ENCODE measurements at regions of chr9 and their contacts with region 1.

Region 1: DNA sequence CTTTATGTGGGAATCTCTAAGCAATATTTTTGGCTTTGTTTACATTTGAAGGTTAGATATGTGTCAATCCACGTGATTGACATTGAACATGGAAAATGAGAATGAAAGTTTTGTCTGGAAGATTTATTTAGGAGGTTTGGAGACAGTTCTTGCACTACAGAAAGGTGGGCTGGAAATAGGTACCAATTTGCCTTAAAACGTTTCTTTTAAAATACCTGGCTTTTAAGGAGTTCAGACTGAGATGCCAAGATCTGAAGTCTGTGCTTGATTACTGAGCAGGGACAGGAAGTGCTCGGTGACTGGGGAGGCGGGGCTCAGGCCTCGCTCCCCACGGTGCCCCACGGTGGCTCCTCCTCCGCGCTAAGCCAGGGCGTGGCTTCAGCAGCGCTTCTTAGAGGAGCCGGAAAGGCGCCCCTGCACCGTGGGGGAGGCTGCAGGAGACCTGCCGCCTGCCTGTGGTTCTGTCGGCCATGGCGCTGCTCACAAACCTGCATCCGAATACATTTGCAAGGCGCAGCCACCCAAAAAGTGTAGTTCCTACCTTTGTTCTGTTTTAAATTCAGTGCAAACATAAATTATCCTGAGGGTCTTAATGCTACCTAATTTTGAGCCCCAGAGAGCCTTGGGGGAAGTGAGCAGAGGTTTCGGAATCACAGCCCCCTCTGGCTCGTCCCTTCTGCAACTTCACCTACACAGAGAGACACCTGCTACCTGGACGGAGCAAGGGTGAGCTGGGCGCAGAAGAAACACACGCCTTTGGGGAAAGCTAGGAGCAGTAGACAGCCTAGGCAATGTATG is 49.2 kb downstream of the USP20 start:
- DNase-seq: peak; percentile 98
- H3K4me3 Mint-ChIP-seq: peak overlapping the region; percentile 80
- H3K27ac Mint-ChIP-seq: peak overlapping the region; percentile 100
- H3K4me1 Mint-ChIP-seq: peaks cover 51% of the 10 kb centered on the region
- H3K27me3 Mint-ChIP-seq: no peaks in the 10 kb centered on the region

Region 2: DNA sequence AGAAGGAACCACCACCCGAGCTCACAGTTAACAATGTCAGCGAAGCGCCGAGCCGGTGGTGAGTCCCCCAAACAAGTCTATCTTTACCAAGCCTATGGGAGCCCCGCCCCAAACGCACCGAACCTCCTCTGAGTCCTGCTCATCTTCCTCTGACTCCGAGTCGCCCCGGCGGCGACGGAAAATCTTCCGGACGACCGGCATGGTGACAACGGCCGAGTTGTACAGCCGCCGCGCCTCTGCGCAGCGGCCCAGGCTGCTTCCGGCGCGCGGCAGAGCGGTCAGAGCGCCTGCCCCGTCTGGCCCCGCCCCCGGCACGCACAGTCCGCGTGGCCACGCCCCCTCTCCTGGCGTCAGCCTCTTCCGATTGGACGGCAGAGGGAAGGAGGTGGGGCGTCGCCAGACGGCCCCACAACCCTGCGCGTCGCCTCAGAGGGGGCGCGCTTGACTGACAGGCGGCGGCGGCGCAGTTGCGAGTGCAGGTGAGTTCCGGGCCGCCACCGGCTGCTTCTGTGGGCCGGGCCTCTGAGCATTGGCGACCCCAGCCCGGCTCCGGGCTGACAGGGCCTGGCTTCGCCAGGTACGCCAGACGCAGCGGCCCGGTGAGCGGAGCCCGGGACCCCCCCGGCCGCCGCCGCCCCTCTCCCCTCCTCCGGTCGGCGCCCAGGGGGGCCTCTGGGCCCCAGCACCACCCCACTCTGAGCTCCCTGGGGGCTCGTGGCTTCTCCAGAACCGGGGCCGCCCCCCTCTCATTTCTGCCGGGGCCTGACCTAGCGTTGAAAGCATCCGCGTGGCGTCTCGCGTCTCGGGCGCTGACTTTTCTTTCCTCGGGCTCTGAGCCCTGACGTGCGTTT is 49.2 kb before region 1 on chr9 and contains the starts of genes C9orf78 and USP20:
- CTCF ChIA-PET with region 1: interaction called, 10 read pairs
- POLR2A ChIA-PET with region 1: interaction called, 98 read pairs
- DNase-seq: peak; percentile 97
- H3K4me3 Mint-ChIP-seq: peak within 1 kb of the TSS; percentile 99
- H3K27ac Mint-ChIP-seq: peak within 1 kb of the TSS; percentile 96
- H3K4me1 Mint-ChIP-seq: peaks cover 59% of the 10 kb centered on the region
- H3K27me3 Mint-ChIP-seq: no peaks in the 10 kb centered on the region
- total RNA-seq, gene C9orf78: 61.6 to 66.2 TPM
- total RNA-seq, gene USP20: 86.4 to 87.6 TPM

Region 3: DNA sequence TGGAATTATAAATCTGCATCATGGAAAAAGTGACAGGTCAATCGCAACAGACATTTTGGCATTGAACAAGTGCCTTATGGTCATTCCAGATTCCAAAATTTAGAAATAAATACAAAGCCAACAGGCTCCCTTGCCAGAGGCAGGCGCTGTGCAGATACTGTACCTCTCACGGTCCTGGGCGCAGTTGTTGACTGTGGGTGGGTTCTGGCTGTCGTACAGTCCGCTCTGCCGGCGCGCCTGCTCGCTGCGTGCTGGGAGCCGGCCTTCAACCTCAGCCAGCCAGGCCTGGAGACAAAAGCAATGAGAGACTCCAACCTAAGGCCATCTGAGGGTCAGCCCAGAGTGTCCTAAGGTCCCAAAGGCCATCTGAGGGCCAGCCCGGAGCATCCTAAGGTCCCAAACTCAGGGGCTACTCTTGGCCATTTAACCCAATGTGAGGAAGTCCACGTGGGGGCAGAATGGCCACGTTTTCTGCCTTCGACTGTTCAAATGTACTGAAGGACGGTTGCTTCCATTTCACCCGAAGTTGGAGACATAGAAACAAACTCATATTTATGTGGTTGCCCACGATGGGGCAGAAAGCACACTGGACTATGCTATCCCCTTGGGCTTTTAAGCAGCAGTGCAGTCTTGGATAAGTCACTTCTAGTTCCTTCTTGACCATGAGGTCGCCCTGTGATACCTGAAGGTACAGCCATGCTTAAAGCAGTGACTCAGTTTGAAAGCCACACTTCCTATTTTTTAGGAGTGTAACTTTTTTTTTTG is 16.0 kb after region 1 on chr9:
- CTCF ChIA-PET with region 1: interaction called, 6 read pairs
- POLR2A ChIA-PET with region 1: interaction called, 69 read pairs
- DNase-seq: no peak
- H3K4me3 Mint-ChIP-seq: no peak overlapping the region
- H3K27ac Mint-ChIP-seq: no peak overlapping the region
- H3K4me1 Mint-ChIP-seq: peaks cover 72% of the 10 kb centered on the region
- H3K27me3 Mint-ChIP-seq: no peaks in the 10 kb centered on the region

Region 4: DNA sequence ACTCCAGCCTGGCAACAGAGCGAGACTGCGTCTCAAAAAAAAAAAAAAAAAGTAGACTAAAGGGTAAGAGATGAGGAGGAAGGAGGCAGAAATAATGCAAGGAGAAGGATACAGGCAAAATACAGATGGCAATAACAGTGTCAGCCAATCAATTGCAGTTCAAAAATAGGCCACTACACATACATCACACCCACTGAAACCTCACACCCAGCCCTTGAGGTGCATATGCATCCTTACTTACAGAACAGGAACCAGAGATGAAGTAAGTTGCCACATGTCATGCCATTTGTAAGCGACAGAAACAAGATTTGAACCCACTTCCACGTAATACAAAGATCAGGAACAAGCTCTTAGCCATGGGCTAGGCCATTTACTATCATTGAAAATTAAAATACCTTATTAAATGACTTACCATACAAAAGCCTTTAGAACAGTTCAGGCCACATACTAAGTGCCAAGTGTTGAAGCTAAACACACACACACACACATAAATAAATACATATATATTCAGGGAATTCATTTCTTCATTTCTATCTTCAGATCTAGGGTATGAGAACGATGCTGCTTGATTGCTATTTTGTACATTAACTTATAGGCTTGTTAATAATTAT is 60.2 kb after region 1 on chr9:
- CTCF ChIA-PET with region 1: interaction called, 6 read pairs
- POLR2A ChIA-PET with region 1: interaction called, 90 read pairs
- DNase-seq: peak; percentile 76
- H3K4me3 Mint-ChIP-seq: peak overlapping the region; percentile 1
- H3K27ac Mint-ChIP-seq: peak overlapping the region; percentile 80
- H3K4me1 Mint-ChIP-seq: peaks cover 49% of the 10 kb centered on the region
- H3K27me3 Mint-ChIP-seq: no peaks in the 10 kb centered on the region

Region 5: GRCh38 chr9:129995409-129996160 is 111.2 kb after region 1 on chr9:
- CTCF ChIA-PET with region 1: interaction called, 12 read pairs
- POLR2A ChIA-PET with region 1: interaction called, 9 read pairs
- DNase-seq: no peak
- H3K4me3 Mint-ChIP-seq: peak overlapping the region; percentile 49
- H3K27ac Mint-ChIP-seq: peak overlapping the region; percentile 87
- H3K4me1 Mint-ChIP-seq: peaks cover 82% of the 10 kb centered on the region
- H3K27me3 Mint-ChIP-seq: no peaks in the 10 kb centered on the region

Region 6: GRCh38 chr9:130042833-130043653 is 158.6 kb after region 1 on chr9 and contains the start of gene FNBP1:
- CTCF ChIA-PET with region 1: interaction called, 27 read pairs
- POLR2A ChIA-PET with region 1: interaction called, 403 read pairs
- DNase-seq: peak; percentile 85
- H3K4me3 Mint-ChIP-seq: peak within 1 kb of the TSS; percentile 90
- H3K27ac Mint-ChIP-seq: peak within 1 kb of the TSS; percentile 91
- H3K4me1 Mint-ChIP-seq: peaks cover 47% of the 10 kb centered on the region
- H3K27me3 Mint-ChIP-seq: no peaks in the 10 kb centered on the region
- total RNA-seq, gene FNBP1: 208 to 213 TPM

Measured in activated CD4-positive, alpha-beta memory T cell treated with anti-CD3 and anti-CD28 coated beads, Interleukin-2, amount 10 ng/mL, durations not matched to agents 7 days and 5 days (primary cell).